K562 (cell line): ENCODE measurements at regions of chr4 and their contacts with region 1.

Region 1: GRCh38 chr4:108360754-108361445 is 192.2 kb upstream of the LEF1 start:
- DNase-seq: peak in 2 of 4 experiments; percentile 25 to 48
- ATAC-seq: peak; percentile 25
- H3K4me3 ChIP-seq: no peak overlapping the region
- H3K27ac ChIP-seq: peak overlapping the region; percentile 86
- H3K4me1 ChIP-seq: peaks cover 17 to 35% of the 10 kb centered on the region in 2 experiments
- H3K27me3 ChIP-seq: no peaks in the 10 kb centered on the region
- CTCF ChIP-seq: no peak
- EP300 ChIP-seq: no peak
- POLR2A ChIP-seq: no peak
- RAD21 ChIP-seq: no peak

Region 2: GRCh38 chr4:108345862-108346817 is 14.8 kb before region 1 on chr4:
- CTCF ChIA-PET with region 1: no interaction called
- POLR2A ChIA-PET with region 1: interaction called, 10 read pairs
- in situ Hi-C with region 1: no loop called
- intact Hi-C with region 1: no loop called
- DNase-seq: no peak
- ATAC-seq: no peak
- H3K4me3 ChIP-seq: no peak overlapping the region
- H3K27ac ChIP-seq: no peak overlapping the region
- H3K4me1 ChIP-seq: peaks cover 6 to 7% of the 10 kb centered on the region in 2 experiments; a peak in 4 of 5 replicates
- H3K27me3 ChIP-seq: no peaks in the 10 kb centered on the region; a peak in 1 of 5 replicates
- CTCF ChIP-seq: no peak
- EP300 ChIP-seq: no peak
- POLR2A ChIP-seq: no peak
- RAD21 ChIP-seq: no peak

Region 3: DNA sequence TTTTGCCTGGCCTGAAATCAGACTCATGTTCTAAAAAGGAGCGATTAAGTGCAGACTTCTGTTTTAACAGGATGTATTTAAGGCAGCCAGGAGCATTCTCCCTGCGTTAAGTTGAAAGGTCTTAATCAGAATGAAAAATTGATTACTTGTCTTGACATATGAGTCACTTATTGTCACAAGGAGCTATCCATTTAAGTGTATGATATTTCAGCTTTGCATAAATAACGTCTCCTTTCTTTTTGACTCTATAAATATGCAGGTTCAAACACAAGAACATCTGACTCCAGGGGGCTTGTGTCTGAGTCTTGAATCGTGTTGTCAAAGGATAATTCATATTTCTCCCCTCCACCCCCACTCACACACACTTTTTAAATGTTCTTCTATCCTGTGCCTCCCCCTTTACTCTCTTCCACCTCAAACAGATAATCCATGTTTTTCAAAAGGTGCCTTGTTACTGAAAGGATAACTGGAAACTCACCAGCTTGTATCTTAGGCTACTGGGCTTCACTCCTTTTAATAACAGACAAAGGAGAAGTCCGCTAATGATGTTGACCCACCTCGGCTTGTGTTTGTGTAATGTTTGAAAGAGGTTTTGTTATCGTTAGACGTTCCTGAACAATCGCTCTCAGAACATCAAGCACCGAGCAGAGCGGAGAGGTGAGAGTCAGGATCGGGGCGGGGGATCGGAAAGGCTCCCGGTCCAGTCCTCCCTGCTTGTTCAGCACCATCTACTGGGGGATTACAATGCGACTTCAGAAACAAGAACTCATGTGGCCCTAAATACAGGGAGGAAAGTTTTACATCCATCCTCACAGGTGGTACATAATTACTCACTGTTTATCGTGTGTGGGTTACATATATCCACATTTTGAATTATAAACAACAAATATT is 152.0 kb after region 1 on chr4:
- CTCF ChIA-PET with region 1: no interaction called
- POLR2A ChIA-PET with region 1: no interaction called
- in situ Hi-C with region 1: no loop called
- intact Hi-C with region 1: no loop called
- DNase-seq: peak; percentile 26 to 74 (median 40)
- ATAC-seq: peak; percentile 93
- H3K4me3 ChIP-seq: no peak overlapping the region
- H3K27ac ChIP-seq: no peak overlapping the region
- H3K4me1 ChIP-seq: no peaks in the 10 kb centered on the region; a peak in 1 of 5 replicates
- H3K27me3 ChIP-seq: peaks cover 0 to 18% of the 10 kb centered on the region in 2 experiments; a peak in 4 of 5 replicates
- CTCF ChIP-seq: peak; percentile 55 to 59 (median 58); a peak in 5 of 6 replicates
- EP300 ChIP-seq: no peak
- POLR2A ChIP-seq: no peak
- RAD21 ChIP-seq: peak; percentile 66 to 73